GM23248 (cell line): ENCODE measurements at regions of chr11 and their contacts with region 1.

Region 1: GRCh38 chr11:131668500-131669400 is 298.3 kb downstream of the NTM start:
- DNase-seq: peak; percentile 75
- H3K4me3 ChIP-seq: no peak overlapping the region
- H3K27ac ChIP-seq: peak overlapping the region; percentile 21; the same call in 1 of the 2 replicates
- H3K4me1 ChIP-seq: peaks cover 37% of the 10 kb centered on the region
- H3K27me3 ChIP-seq: no peaks in the 10 kb centered on the region

Region 2: DNA sequence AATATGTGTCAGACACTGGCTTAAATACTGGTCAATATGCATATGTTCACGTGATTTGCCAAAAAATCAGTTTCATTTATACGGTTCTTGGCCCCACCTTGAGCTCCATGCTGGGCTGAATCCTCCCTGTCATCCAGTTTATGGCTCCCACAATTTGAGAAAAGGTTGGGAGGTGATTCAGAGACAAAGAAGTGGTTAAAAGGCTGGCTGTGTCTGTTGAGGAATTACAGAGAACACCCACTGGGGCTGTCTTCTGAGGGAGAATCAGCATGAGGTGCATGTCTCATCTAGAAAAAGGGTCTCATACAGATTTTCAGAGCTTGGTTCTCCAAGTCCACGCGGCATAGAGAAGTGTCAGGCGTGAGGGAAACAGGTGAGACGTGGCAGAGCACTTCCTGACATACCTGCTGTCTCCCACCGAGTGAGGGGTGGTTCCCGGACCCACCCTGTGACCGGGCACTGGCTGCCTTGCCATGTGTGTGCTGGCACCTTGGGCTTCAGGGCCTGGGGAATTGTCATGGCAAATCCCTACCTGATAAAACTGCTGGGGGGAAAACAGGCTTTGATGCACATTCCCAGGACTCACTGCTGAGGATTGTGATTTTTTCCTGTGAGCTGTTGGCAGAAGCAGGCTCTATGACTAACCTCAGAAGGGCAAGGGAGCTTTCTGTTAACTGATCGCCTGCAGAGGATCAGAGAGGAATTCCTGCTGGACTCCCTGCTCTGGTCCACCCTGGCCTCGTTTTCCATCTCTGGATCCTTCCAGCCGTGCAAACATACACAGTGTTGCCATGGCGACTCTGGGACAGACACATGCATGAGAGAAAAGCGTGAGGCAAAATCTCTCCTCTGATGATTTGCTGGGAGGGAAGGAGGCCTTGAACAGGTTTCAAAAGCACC is 996.7 kb before region 1 on chr11:
- in situ Hi-C with region 1: no loop called
- DNase-seq: peak; percentile 91
- H3K4me3 ChIP-seq: no peak overlapping the region
- H3K27ac ChIP-seq: peak overlapping the region; percentile 51
- H3K4me1 ChIP-seq: peaks cover 43% of the 10 kb centered on the region
- H3K27me3 ChIP-seq: no peaks in the 10 kb centered on the region

Region 3: DNA sequence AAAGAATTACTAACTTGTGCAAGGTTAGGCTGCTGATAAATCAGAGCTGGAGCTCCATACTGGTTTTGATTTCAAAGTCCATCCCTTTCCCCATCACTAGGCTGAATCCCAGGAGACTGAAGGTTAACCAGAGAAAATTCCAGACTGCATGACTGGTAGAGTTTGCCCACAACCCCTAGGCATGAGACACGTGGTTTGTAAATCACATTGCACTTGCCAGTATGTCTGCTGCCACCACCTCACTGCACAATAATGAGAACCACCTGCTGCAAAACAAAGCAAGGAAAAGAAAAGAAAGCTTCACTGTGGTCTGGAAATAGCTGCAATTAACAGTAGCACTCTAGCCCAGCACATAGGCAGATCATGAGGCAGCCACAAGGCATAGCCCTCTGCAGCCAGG is 365.9 kb before region 1 on chr11:
- in situ Hi-C with region 1: no loop called
- DNase-seq: peak; percentile 15
- H3K4me3 ChIP-seq: no peak overlapping the region
- H3K27ac ChIP-seq: no peak overlapping the region
- H3K4me1 ChIP-seq: no peaks in the 10 kb centered on the region
- H3K27me3 ChIP-seq: peaks cover 39% of the 10 kb centered on the region

Region 4: GRCh38 chr11:131584785-131585592 is 83.8 kb before region 1 on chr11:
- in situ Hi-C with region 1: loop called (anchors 5 kb)
- DNase-seq: no peak
- H3K4me3 ChIP-seq: no peak overlapping the region
- H3K27ac ChIP-seq: no peak overlapping the region
- H3K4me1 ChIP-seq: peaks cover 21% of the 10 kb centered on the region
- H3K27me3 ChIP-seq: no peaks in the 10 kb centered on the region

Region 5: DNA sequence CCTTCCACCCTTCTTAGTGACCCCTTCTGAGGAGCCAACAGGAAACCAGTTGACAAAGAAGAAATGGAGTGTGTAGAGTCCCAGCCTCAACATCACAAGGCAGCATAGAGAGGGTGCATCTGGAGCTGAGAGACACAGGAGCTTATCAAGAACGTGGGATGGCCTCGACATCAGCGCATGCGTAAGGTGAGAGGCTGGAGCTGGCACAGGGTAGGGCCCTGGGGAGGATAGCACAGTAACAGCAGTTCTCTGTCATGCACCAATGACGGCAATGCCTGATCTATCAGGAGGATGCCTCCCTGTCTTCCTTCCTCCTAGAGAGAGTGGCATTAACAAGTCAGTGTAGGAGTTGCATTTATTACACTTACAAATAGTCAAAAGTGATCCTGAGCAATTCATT is 127.8 kb after region 1 on chr11:
- in situ Hi-C with region 1: no loop called
- DNase-seq: no peak
- H3K4me3 ChIP-seq: no peak overlapping the region
- H3K27ac ChIP-seq: no peak overlapping the region
- H3K4me1 ChIP-seq: no peaks in the 10 kb centered on the region
- H3K27me3 ChIP-seq: peaks cover 25% of the 10 kb centered on the region; the same call in 1 of the 2 replicates

Region 6: GRCh38 chr11:131910523-131911387 is 242.0 kb after region 1 on chr11:
- in situ Hi-C with region 1: no loop called
- DNase-seq: peak; percentile 77
- H3K4me3 ChIP-seq: peak overlapping the region; percentile 95
- H3K27ac ChIP-seq: peak overlapping the region; percentile 37
- H3K4me1 ChIP-seq: peaks cover 19% of the 10 kb centered on the region
- H3K27me3 ChIP-seq: no peaks in the 10 kb centered on the region